CD4-positive, alpha-beta memory T cell (primary cell): ENCODE measurements at regions of chr14 and their contacts with region 1.

Region 1: DNA sequence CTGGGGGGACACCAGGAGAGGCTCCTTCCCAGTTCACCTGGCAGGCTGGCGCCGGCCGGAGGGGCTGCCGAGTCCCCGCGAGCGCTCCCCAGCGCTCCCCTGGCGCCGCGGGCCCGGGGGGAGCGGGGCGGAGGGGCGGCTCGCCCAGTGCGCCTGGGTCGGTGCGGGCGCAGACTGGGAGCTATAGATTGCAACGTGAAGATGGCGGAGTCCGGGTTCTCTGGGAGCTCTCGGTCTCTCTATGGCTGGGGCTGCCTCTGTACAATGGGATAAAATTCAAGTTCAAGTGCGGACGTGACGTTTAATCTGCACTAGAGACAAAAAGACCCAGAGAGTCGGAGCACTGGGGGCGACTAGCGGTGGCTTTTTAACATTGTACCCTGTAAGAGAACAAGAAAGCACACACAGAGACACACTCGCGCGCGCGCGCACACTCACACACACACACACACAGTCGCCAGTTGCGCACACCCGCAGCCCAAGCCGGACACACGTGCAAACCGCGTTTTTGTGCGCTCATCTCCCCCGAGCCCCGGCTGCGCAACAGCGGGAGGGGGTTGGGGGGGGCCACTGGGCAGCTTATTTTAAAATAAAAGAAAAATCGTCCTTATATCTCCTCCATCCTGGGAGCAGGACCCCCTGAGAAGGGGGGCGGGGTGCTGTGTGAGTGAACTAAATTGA is at the start of gene BCL11B:
- DNase-seq: peak; percentile 87 to 96 (median 91)
- H3K4me3 ChIP-seq: peak within 1 kb of the TSS; percentile 91 to 93
- H3K4me3 Mint-ChIP-seq: peak within 1 kb of the TSS; percentile 92 to 100 (median 98)
- H3K27ac ChIP-seq: peak within 1 kb of the TSS; percentile 80
- H3K27ac Mint-ChIP-seq: peak within 1 kb of the TSS; percentile 95 to 99 (median 96)
- H3K4me1 ChIP-seq: peaks cover 21% of the 10 kb centered on the region
- H3K4me1 Mint-ChIP-seq: peaks cover 12 to 53% (median 27%) of the 10 kb centered on the region in 4 donors
- H3K27me3 ChIP-seq: no peaks in the 10 kb centered on the region
- H3K27me3 Mint-ChIP-seq: no peaks in the 10 kb centered on the region
- total RNA-seq, gene BCL11B: 163 to 165 TPM

Region 2: DNA sequence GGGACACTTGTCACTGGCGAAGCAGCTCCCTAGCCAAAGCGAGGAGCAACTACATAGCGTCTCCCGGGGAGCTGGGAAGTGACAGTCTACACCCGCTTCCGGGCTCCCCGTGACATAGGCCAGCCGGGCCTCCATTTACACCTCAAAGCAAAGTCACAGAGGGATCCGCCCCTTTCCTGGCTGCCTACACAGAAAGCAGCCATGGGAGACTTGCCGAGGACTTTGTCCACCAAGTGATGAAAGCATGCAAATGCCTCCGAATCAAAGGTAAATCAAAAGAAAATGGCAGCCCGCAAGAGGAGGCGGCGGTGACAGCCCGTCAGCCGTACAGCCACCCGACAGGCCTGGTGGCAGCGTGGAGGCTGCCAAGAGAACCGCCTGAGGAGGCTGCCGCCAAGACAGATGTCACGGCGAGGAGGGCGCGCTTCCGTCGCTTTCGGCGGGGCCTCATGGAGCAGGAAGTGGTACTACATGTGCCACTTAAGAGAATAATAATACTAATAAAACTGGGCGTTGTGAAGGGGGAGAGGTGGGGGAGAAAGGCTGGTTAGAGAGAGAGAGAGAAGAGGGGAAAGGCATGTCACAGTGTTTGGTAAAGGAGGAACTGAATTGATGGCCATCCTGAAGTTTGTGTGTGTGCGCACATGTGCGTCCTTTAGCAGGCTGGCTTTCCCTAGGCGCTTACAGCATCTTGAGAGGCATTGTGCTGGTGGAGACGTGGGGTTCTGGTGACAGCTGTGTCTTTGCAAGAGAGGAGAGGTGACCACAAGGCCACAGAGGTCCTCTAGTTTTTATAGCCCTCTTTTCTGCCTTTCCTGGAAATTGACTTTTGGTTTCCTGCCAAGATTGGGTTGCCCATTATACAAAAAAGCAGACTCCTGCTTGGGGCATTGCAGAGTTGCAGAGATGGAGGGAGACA is 1813.2 kb before region 1 on chr14:
- CTCF ChIA-PET with region 1: no interaction called
- POLR2A ChIA-PET with region 1: interaction called, 3 read pairs
- intact Hi-C with region 1: loop called (anchors 2 kb)
- DNase-seq: peak; percentile 82 to 91 (median 85)
- H3K4me3 ChIP-seq: peak overlapping the region; percentile 50 to 69
- H3K4me3 Mint-ChIP-seq: peak overlapping the region; percentile 89 to 97 (median 94)
- H3K27ac ChIP-seq: peak overlapping the region; percentile 70
- H3K27ac Mint-ChIP-seq: peak overlapping the region; percentile 91 to 99 (median 97)
- H3K4me1 ChIP-seq: peaks cover 45% of the 10 kb centered on the region
- H3K4me1 Mint-ChIP-seq: peaks cover 28 to 69% (median 50%) of the 10 kb centered on the region in 4 donors
- H3K27me3 ChIP-seq: no peaks in the 10 kb centered on the region
- H3K27me3 Mint-ChIP-seq: no peaks in the 10 kb centered on the region

Region 3: DNA sequence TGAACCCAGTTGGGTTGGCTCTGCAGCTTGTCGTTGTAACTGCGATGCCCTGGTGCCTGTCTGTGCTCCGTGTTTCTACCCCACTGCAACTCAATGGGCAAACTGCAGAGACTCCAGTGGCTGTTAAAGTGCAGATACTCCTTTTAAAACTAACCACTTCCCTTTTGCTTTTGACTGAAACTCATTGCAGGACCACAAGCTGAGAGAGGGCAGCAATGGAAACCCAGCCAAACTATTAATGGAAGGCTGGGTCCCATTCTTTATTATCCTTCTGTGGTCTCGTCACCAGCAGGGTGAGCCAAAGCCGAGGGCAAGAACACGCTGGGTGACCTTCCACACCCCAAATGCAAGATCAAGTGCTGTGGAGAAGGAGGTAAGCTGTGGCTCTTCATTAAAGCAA is 1564.5 kb before region 1 on chr14:
- CTCF ChIA-PET with region 1: interaction called, 3 read pairs
- POLR2A ChIA-PET with region 1: interaction called, 7 read pairs
- intact Hi-C with region 1: loop called (anchors 5 kb)
- DNase-seq: peak; percentile 24 to 36 (median 28)
- H3K4me3 ChIP-seq: no peak overlapping the region
- H3K4me3 Mint-ChIP-seq: peak overlapping the region in 7 of 8 donors; percentile 25 to 88 (median 68)
- H3K27ac ChIP-seq: no peak overlapping the region
- H3K27ac Mint-ChIP-seq: peak overlapping the region; percentile 5 to 85 (median 74)
- H3K4me1 ChIP-seq: peaks cover 84% of the 10 kb centered on the region
- H3K4me1 Mint-ChIP-seq: peaks cover 79 to 100% (median 90%) of the 10 kb centered on the region in 4 donors
- H3K27me3 ChIP-seq: no peaks in the 10 kb centered on the region
- H3K27me3 Mint-ChIP-seq: no peaks in the 10 kb centered on the region

Region 4: DNA sequence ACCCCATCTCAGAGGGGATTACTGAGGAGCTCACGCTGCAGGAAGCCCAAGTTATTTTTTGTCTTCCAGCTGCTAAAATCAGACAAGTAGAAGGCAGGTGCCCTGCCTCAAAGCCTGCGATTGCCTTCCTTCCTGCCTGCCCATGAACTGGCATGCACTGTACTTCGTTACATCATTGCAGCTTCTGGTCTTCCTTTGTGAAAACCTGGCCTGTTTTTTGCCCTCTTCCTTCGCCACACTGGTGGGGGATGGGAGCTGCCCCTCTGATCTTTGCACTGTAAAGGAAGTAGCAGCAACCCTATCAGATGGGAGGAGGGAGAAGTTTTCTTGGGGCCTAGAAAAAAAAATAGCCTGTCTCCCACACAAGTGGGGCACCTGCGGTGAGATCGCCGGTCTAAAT is 1098.8 kb before region 1 on chr14:
- CTCF ChIA-PET with region 1: interaction called, 14 read pairs
- POLR2A ChIA-PET with region 1: interaction called, 21 read pairs
- intact Hi-C with region 1: no loop called
- DNase-seq: peak; percentile 74 to 80 (median 77)
- H3K4me3 ChIP-seq: peak overlapping the region in 1 of 2 donors; percentile 33
- H3K4me3 Mint-ChIP-seq: peak overlapping the region; percentile 75 to 87 (median 81)
- H3K27ac ChIP-seq: peak overlapping the region; percentile 64
- H3K27ac Mint-ChIP-seq: peak overlapping the region; percentile 86 to 99 (median 94)
- H3K4me1 ChIP-seq: peaks cover 100% of the 10 kb centered on the region
- H3K4me1 Mint-ChIP-seq: peaks cover 87 to 100% (median 93%) of the 10 kb centered on the region in 4 donors
- H3K27me3 ChIP-seq: no peaks in the 10 kb centered on the region
- H3K27me3 Mint-ChIP-seq: no peaks in the 10 kb centered on the region

Region 5: GRCh38 chr14:98227000-98227726 is 1044.9 kb before region 1 on chr14:
- CTCF ChIA-PET with region 1: interaction called, 3 read pairs
- POLR2A ChIA-PET with region 1: interaction called, 12 read pairs
- intact Hi-C with region 1: loop called (anchors 5 kb)
- DNase-seq: peak in 3 of 5 donors; percentile 22 to 24 (median 24)
- H3K4me3 ChIP-seq: peak overlapping the region in 1 of 2 donors; percentile 24
- H3K4me3 Mint-ChIP-seq: peak overlapping the region; percentile 56 to 89 (median 71)
- H3K27ac ChIP-seq: peak overlapping the region; percentile 55
- H3K27ac Mint-ChIP-seq: peak overlapping the region; percentile 89 to 97 (median 90)
- H3K4me1 ChIP-seq: peaks cover 96% of the 10 kb centered on the region
- H3K4me1 Mint-ChIP-seq: peaks cover 67 to 88% (median 77%) of the 10 kb centered on the region in 4 donors
- H3K27me3 ChIP-seq: no peaks in the 10 kb centered on the region
- H3K27me3 Mint-ChIP-seq: no peaks in the 10 kb centered on the region

Region 6: GRCh38 chr14:99192028-99192621 is 80.0 kb before region 1 on chr14:
- CTCF ChIA-PET with region 1: interaction called, 39 read pairs
- POLR2A ChIA-PET with region 1: interaction called, 6,015 read pairs
- intact Hi-C with region 1: loop called (anchors 2 kb)
- DNase-seq: peak in 3 of 5 donors; percentile 58 to 75 (median 62)
- H3K4me3 ChIP-seq: peak overlapping the region; percentile 48 to 75
- H3K4me3 Mint-ChIP-seq: peak overlapping the region; percentile 81 to 94 (median 88)
- H3K27ac ChIP-seq: peak overlapping the region; percentile 81
- H3K27ac Mint-ChIP-seq: peak overlapping the region; percentile 92 to 99 (median 98)
- H3K4me1 ChIP-seq: peaks cover 94% of the 10 kb centered on the region
- H3K4me1 Mint-ChIP-seq: peaks cover 80 to 97% (median 90%) of the 10 kb centered on the region in 4 donors
- H3K27me3 ChIP-seq: no peaks in the 10 kb centered on the region
- H3K27me3 Mint-ChIP-seq: no peaks in the 10 kb centered on the region